ENCODE measurements at regions of chr1 and their contacts with region 1.

Region 1: GRCh38 chr1:36285448-36286101 is 20.6 kb upstream of the SH3D21 start:
- DNase-seq: peak; percentile 65
- H3K4me3 Mint-ChIP-seq: no peak overlapping the region
- H3K27ac Mint-ChIP-seq: no peak overlapping the region
- H3K4me1 Mint-ChIP-seq: peaks cover 7% of the 10 kb centered on the region
- H3K27me3 Mint-ChIP-seq: no peaks in the 10 kb centered on the region
- CTCF ChIP-seq: peak; percentile 55

Region 2: GRCh38 chr1:36099681-36100341 is 185.8 kb before region 1 on chr1:
- CTCF ChIA-PET with region 1: no interaction called
- intact Hi-C with region 1: loop called (anchors 2 kb)
- DNase-seq: peak; percentile 89
- H3K4me3 Mint-ChIP-seq: peak overlapping the region; percentile 51
- H3K27ac Mint-ChIP-seq: peak overlapping the region; percentile 47
- H3K4me1 Mint-ChIP-seq: peaks cover 10% of the 10 kb centered on the region
- H3K27me3 Mint-ChIP-seq: no peaks in the 10 kb centered on the region
- CTCF ChIP-seq: peak; percentile 95

Region 3: DNA sequence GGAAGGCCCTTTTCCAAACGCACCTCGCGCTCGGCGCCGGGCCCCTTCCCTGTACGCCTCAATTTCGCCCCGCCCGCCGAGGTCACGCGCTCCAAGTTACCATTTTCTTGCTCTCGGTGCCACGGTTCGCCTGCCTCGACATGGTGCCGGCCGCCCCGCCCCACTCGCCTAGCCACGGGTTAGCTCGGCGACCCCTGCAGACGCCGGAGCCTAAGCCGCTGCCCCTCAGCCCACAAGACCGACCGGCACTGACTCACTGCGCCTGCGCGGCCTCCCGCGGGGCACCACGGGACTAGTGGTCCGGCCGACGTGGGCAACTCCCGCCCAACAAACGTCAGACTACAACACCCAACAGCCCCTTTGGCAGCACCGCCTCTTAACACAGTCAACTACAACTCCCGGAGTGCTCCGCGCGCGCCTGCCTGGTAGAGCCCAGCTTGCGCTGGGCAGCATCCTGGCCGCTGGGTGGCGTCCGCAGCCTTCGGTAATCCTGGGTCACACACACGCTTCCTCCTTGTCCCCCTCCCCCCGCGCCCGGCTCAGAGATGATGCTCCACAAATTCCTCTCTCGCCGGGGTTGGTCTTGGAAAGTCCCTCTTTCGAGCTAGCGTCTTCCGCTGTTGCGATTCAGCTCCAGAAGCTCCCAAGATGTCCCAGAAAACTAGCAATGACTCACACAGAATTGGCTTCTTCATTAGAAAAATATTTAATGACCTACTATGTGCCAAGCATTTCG is 136.2 kb before region 1 on chr1 and contains the start of gene TRAPPC3:
- CTCF ChIA-PET with region 1: interaction called, 14 read pairs
- intact Hi-C with region 1: loop called (anchors 5 kb)
- DNase-seq: peak; percentile 99
- H3K4me3 Mint-ChIP-seq: peak within 1 kb of the TSS; percentile 100
- H3K27ac Mint-ChIP-seq: peak within 1 kb of the TSS; percentile 98
- H3K4me1 Mint-ChIP-seq: peaks cover 22% of the 10 kb centered on the region
- H3K27me3 Mint-ChIP-seq: no peaks in the 10 kb centered on the region
- CTCF ChIP-seq: peak; percentile 79
- total RNA-seq, gene TRAPPC3: 70.3 and 71.5 TPM in 2 replicates

Region 4: GRCh38 chr1:36187800-36188593 is 97.6 kb before region 1 on chr1:
- CTCF ChIA-PET with region 1: interaction called, 10 read pairs
- intact Hi-C with region 1: no loop called
- DNase-seq: peak; percentile 84
- H3K4me3 Mint-ChIP-seq: no peak overlapping the region
- H3K27ac Mint-ChIP-seq: peak overlapping the region; percentile 84
- H3K4me1 Mint-ChIP-seq: peaks cover 10% of the 10 kb centered on the region
- H3K27me3 Mint-ChIP-seq: no peaks in the 10 kb centered on the region
- CTCF ChIP-seq: peak; percentile 84

Region 5: DNA sequence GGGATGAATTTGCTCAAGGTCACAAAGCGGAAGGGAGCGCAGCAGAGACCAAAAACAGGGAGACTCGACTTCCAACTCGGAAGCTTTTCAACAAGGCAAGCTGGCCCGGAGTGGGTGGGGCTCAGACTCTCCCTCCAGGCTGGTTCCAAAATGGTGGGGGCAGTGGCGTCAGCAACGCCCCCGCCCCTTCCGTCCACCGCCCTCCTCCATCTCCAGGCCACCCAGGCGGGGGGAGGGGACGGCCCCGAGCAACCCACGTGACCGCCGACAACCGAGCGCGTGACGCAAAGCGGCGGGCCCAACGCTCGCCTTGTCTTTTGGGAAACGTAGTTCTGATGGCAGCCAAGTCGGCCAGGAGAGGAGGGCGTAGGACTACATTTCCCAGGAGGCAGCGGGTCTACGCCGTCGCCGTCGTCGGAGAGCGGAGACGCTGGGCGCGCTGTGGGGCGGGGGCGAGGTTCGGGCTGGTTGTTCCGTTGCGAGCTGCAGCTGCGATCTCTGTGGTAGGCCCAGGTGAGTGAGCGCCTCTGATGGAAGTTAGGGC is 61.5 kb before region 1 on chr1 and contains the start of gene THRAP3:
- CTCF ChIA-PET with region 1: no interaction called
- intact Hi-C with region 1: loop called (anchors 10 kb)
- DNase-seq: peak; percentile 100
- H3K4me3 Mint-ChIP-seq: peak within 1 kb of the TSS; percentile 96
- H3K27ac Mint-ChIP-seq: peak within 1 kb of the TSS; percentile 96
- H3K4me1 Mint-ChIP-seq: peaks cover 21% of the 10 kb centered on the region
- H3K27me3 Mint-ChIP-seq: no peaks in the 10 kb centered on the region
- CTCF ChIP-seq: no peak
- total RNA-seq, gene THRAP3: 97.5 and 99.4 TPM in 2 replicates

Region 6: DNA sequence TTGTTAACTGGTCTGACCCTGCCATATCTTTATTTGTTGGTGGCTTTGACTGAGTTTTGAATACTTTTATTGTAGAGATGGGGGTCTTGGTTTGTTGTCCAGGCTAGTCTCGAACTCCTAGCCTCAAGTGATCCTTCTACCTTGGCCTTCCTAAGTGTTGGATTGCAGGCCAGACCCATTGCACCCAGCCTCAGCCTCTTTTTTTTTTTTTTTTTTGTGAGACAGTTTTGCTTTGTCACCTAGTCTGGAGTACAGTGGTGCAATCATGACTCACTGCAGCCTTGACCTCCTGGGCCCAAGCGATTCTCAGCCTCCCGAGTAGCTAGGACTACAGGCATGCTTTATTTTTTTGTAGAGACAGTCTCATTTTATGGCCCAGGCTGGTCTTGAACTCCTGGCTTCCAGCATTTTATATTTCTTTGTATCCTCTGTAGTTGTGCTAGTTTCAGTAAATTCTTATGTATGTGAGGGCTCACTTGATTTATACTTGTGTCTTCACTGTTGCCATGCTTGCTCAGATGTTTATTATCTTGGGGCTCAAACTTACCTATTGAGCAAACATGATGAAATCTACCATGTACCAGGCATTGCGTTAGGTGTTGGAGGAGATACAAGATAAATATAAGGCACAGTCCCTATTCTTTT is 37.2 kb before region 1 on chr1:
- CTCF ChIA-PET with region 1: no interaction called
- intact Hi-C with region 1: loop called (anchors 5 kb)
- DNase-seq: peak; percentile 66
- H3K4me3 Mint-ChIP-seq: peak overlapping the region; percentile 43
- H3K27ac Mint-ChIP-seq: peak overlapping the region; percentile 97
- H3K4me1 Mint-ChIP-seq: peaks cover 31% of the 10 kb centered on the region
- H3K27me3 Mint-ChIP-seq: no peaks in the 10 kb centered on the region
- CTCF ChIP-seq: no peak

Region 7: GRCh38 chr1:36269408-36269838 is 16.2 kb before region 1 on chr1:
- CTCF ChIA-PET with region 1: no interaction called
- intact Hi-C with region 1: no loop called
- DNase-seq: no peak
- H3K4me3 Mint-ChIP-seq: no peak overlapping the region
- H3K27ac Mint-ChIP-seq: no peak overlapping the region
- H3K4me1 Mint-ChIP-seq: no peaks in the 10 kb centered on the region
- H3K27me3 Mint-ChIP-seq: no peaks in the 10 kb centered on the region
- CTCF ChIP-seq: no peak

Region 8: GRCh38 chr1:36300526-36300925 is 15.0 kb after region 1 on chr1:
- CTCF ChIA-PET with region 1: interaction called, 17 read pairs
- intact Hi-C with region 1: no loop called
- DNase-seq: no peak
- H3K4me3 Mint-ChIP-seq: peak overlapping the region; percentile 41
- H3K27ac Mint-ChIP-seq: peak overlapping the region; percentile 94
- H3K4me1 Mint-ChIP-seq: peaks cover 22% of the 10 kb centered on the region
- H3K27me3 Mint-ChIP-seq: no peaks in the 10 kb centered on the region
- CTCF ChIP-seq: no peak